ENCODE measurements at regions of chr11 and their contacts with region 1.

Region 1: GRCh38 chr11:108497317-108498045 is 703 bp downstream of the POGLUT3 start:
- DNase-seq: peak; percentile 83 to 97
- H3K4me3 ChIP-seq: peak overlapping the region; percentile 67 to 86
- H3K27ac ChIP-seq: peak overlapping the region; percentile 94 to 97
- H3K4me1 ChIP-seq: peaks cover 0 to 3% of the 10 kb centered on the region in 2 donors
- H3K27me3 ChIP-seq: no peaks in the 10 kb centered on the region
- CTCF ChIP-seq: no peak

Region 2: DNA sequence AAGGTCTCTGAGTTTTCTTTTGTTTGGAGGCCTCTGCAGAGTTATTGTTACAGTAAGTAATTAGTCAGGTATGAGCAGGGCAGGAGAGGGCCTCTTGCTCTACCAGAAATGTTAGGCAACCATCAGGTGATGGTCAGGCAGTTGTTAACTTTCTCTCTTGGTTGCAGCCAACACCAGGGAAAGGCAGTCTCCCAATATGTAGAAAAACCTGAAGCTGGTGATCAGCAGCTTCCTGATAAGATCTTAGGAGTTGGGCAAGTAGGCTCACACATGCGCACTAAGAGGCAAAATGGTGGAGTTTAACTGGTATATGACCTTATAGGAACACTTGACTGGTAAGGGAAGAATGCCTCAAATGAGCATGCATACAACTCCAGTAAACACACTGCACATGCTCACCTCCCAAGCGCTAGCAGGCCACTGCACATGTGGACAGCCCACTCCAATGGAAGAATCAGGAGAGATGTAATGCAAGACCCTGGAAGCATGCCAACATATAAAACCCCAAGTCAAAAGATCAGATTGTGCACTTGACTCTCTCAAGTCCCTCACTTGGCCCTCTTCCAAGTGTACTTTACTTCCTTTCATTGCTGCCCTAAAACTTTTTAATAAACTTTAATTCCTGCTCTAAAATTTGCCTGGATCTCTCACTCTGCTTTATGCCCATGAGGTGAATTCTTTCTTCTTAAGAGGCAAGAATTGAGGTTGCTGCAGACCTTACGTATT is 615.2 kb before region 1 on chr11:
- intact Hi-C with region 1: no loop called
- DNase-seq: no peak
- H3K4me3 ChIP-seq: no peak overlapping the region
- H3K27ac ChIP-seq: no peak overlapping the region
- H3K4me1 ChIP-seq: no peaks in the 10 kb centered on the region
- H3K27me3 ChIP-seq: no peaks in the 10 kb centered on the region
- CTCF ChIP-seq: no peak

Region 3: GRCh38 chr11:107908306-107908705 is 589.2 kb before region 1 on chr11:
- intact Hi-C with region 1: no loop called
- DNase-seq: no peak
- H3K4me3 ChIP-seq: no peak overlapping the region
- H3K27ac ChIP-seq: no peak overlapping the region
- H3K4me1 ChIP-seq: no peaks in the 10 kb centered on the region
- H3K27me3 ChIP-seq: no peaks in the 10 kb centered on the region
- CTCF ChIP-seq: no peak

Region 4: GRCh38 chr11:108121274-108122155 is 376.0 kb before region 1 on chr11 and contains the start of gene ACAT1:
- intact Hi-C with region 1: loop called (anchors 5 kb)
- DNase-seq: peak; percentile 96 to 99
- H3K4me3 ChIP-seq: peak within 1 kb of the TSS; percentile 84 to 92
- H3K27ac ChIP-seq: peak within 1 kb of the TSS; percentile 96 to 97
- H3K4me1 ChIP-seq: peaks cover 0 to 20% of the 10 kb centered on the region in 2 donors
- H3K27me3 ChIP-seq: no peaks in the 10 kb centered on the region
- CTCF ChIP-seq: peak in 2 of 3 experiments; percentile 9 to 39
- total RNA-seq, gene ACAT1: 187 TPM

Region 5: DNA sequence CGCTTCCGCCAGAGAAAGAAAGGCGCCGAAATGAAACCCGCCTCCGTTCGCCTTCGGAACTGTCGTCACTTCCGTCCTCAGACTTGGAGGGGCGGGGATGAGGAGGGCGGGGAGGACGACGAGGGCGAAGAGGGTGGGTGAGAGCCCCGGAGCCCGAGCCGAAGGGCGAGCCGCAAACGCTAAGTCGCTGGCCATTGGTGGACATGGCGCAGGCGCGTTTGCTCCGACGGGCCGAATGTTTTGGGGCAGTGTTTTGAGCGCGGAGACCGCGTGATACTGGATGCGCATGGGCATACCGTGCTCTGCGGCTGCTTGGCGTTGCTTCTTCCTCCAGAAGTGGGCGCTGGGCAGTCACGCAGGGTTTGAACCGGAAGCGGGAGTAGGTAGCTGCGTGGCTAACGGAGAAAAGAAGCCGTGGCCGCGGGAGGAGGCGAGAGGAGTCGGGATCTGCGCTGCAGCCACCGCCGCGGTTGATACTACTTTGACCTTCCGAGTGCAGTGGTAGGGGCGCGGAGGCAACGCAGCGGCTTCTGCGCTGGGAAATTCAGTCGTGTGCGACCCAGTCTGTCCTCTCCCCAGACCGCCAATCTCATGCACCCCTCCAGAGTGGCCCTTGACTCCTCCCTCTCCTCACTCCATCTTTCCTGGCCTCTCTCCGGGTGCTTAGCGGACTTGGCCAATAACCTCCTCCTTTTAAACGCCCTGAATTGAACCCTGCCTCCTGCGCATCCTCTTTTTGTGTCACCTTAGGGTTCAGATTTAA is 274.6 kb before region 1 on chr11 and contains the start of gene ATM:
- intact Hi-C with region 1: loop called (anchors 2 kb)
- DNase-seq: peak; percentile 97 to 99
- H3K4me3 ChIP-seq: peak within 1 kb of the TSS; percentile 80 to 85
- H3K27ac ChIP-seq: peak within 1 kb of the TSS; percentile 92 to 97
- H3K4me1 ChIP-seq: peaks cover 0 to 13% of the 10 kb centered on the region in 2 donors
- H3K27me3 ChIP-seq: no peaks in the 10 kb centered on the region
- CTCF ChIP-seq: peak; percentile 56 to 76 (median 74)
- total RNA-seq, gene ATM: 16.0 TPM

Region 6: GRCh38 chr11:108253176-108253575 is 244.3 kb before region 1 on chr11:
- intact Hi-C with region 1: no loop called
- DNase-seq: no peak
- H3K4me3 ChIP-seq: no peak overlapping the region
- H3K27ac ChIP-seq: no peak overlapping the region
- H3K4me1 ChIP-seq: no peaks in the 10 kb centered on the region
- H3K27me3 ChIP-seq: no peaks in the 10 kb centered on the region
- CTCF ChIP-seq: no peak

Region 7: DNA sequence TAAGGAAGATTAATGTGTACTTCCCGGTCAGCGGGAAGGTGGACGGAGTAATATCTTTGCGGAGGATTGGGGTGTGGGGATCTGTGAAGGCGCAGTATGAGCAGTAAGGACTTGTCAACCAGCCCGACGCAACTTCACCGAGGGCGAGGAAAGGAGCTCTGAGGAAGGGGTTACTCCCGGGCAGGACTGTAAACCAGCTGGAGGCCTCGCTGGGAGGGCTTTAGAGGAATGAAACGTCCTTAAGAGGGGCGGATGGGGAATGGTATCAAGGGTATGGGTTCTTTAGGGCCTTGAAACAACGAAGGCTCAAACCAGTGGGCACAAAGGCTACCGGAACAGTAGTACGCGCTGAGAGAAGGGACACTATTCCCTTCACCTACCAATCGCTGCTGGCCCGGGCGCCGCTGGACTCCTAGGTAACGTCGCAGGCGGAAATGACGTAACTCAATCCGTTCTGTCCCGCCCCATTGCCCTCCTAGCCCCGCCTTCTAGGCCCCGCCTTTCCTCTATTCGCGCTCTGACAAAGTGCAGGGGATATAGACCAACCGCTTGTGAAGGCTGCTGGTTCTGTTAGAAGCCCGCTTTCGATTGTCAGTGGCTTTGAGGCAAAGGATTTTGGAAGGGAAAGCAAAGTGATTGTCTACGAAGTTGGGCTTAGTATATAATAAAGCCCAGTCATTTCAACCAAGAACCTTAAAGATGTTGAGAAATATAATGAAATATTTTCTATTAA is 30.2 kb before region 1 on chr11 and contains the start of gene C11orf65:
- intact Hi-C with region 1: loop called (anchors 1 kb)
- DNase-seq: peak; percentile 85 to 98
- H3K4me3 ChIP-seq: peak within 1 kb of the TSS; percentile 73 to 74
- H3K27ac ChIP-seq: peak within 1 kb of the TSS; percentile 97
- H3K4me1 ChIP-seq: peaks cover 0 to 7% of the 10 kb centered on the region in 2 donors
- H3K27me3 ChIP-seq: no peaks in the 10 kb centered on the region
- CTCF ChIP-seq: no peak
- total RNA-seq, gene C11orf65: not detected

Region 8: GRCh38 chr11:108511851-108512474 is 14.5 kb after region 1 on chr11:
- intact Hi-C with region 1: no loop called
- DNase-seq: no peak
- H3K4me3 ChIP-seq: no peak overlapping the region
- H3K27ac ChIP-seq: no peak overlapping the region
- H3K4me1 ChIP-seq: no peaks in the 10 kb centered on the region
- H3K27me3 ChIP-seq: no peaks in the 10 kb centered on the region
- CTCF ChIP-seq: no peak

Region 9: DNA sequence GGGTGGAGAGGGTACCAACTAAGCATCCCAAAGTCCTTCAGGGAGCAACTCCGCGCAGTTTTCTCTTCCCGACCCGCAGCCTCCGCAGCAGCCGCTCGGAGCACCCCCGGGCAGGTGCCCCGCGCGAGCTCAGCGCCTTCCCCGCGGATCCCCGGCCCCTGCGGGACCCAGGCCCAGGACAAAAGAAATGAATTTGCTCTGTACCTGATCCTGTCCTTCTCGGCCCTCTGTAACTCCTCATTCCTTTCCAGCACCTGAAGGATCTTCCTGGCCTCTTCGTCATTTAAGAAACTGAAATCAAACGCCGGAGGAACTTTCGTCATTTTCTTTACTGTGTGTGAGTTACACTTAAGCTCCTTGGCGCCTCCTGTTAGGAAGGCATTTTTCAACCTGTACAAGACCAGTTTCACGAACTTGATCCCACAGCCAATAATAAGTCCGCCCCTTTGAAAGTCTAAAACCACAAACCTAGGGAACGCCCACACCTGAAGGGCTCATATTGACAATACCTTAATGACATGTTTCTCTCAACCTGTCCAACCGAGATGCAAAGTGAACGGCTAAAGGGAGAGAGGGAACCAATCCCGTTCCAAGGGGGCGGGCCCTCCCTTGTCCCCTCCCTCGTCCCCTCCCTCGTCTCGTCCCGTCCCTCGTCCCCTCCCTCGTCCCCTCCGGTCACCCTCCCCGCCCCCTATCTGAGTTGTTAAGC is 95.9 kb after region 1 on chr11 and contains the start of gene EXPH5:
- intact Hi-C with region 1: loop called (anchors 2 kb)
- DNase-seq: peak; percentile 53 to 90
- H3K4me3 ChIP-seq: peak within 1 kb of the TSS; percentile 73 to 81
- H3K27ac ChIP-seq: peak within 1 kb of the TSS; percentile 9 to 52
- H3K4me1 ChIP-seq: no peaks in the 10 kb centered on the region
- H3K27me3 ChIP-seq: no peaks in the 10 kb centered on the region
- CTCF ChIP-seq: no peak
- total RNA-seq, gene EXPH5: 1.1 TPM

Region 10: GRCh38 chr11:108647701-108648527 is 150.4 kb after region 1 on chr11:
- intact Hi-C with region 1: loop called (anchors 2 kb)
- DNase-seq: peak in 1 of 2 donors; percentile 71
- H3K4me3 ChIP-seq: no peak overlapping the region
- H3K27ac ChIP-seq: peak overlapping the region; percentile 34 to 47
- H3K4me1 ChIP-seq: peaks cover 0 to 6% of the 10 kb centered on the region in 2 donors
- H3K27me3 ChIP-seq: no peaks in the 10 kb centered on the region
- CTCF ChIP-seq: peak; percentile 64 to 66 (median 64)

Region 11: GRCh38 chr11:108664730-108665525 is 167.4 kb after region 1 on chr11 and contains the start of gene DDX10:
- intact Hi-C with region 1: loop called (anchors 1 kb)
- DNase-seq: peak; percentile 87 to 99
- H3K4me3 ChIP-seq: peak within 1 kb of the TSS; percentile 63 to 88
- H3K27ac ChIP-seq: peak within 1 kb of the TSS; percentile 37 to 65
- H3K4me1 ChIP-seq: peaks cover 8 to 21% of the 10 kb centered on the region in 2 donors
- H3K27me3 ChIP-seq: no peaks in the 10 kb centered on the region
- CTCF ChIP-seq: no peak
- total RNA-seq, gene DDX10: 21.9 TPM